Psoas muscle (tissue), 8 donors: ENCODE measurements at regions of chr5 and their contacts with region 1.

Region 1: GRCh38 chr5:86880785-86881492 is 263.2 kb downstream of the COX7C start:
- DNase-seq: no peak
- ATAC-seq: peak; percentile 67 to 80 (median 76)
- H3K4me3 ChIP-seq: no peak overlapping the region
- H3K27ac ChIP-seq: no peak overlapping the region
- H3K4me1 ChIP-seq: no peaks in the 10 kb centered on the region
- H3K27me3 ChIP-seq: no peaks in the 10 kb centered on the region
- CTCF ChIP-seq: peak; percentile 52

Region 2: DNA sequence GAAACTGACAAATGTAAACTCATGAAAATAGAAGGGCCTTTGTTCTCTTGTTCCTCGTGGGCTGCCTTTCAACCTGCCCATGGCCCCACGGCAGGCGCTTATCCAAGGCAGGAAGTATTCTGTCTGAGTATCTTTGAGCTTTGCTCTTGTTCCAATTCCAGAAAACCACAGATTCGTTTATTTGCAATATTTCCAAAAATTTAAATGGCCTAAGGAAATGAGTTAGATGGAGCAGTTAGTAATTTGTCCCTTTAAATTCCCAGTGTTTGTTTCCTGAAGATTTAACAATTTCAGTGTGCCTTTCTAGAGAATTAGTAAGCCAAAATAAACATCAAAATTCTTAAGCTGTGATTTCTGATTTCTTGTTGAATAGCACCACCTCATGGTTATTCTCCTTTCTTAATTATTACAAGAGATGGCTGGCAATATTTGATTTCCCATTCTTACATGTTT is 87.4 kb after region 1 on chr5:
- intact Hi-C with region 1: loop called in 1 of 2 experiments (anchors 5 kb)
- DNase-seq: peak; percentile 10 to 39
- ATAC-seq: no peak
- H3K4me3 ChIP-seq: no peak overlapping the region
- H3K27ac ChIP-seq: no peak overlapping the region
- H3K4me1 ChIP-seq: no peaks in the 10 kb centered on the region
- H3K27me3 ChIP-seq: no peaks in the 10 kb centered on the region
- CTCF ChIP-seq: peak; percentile 37

Region 3: GRCh38 chr5:87008751-87009560 is 128.0 kb after region 1 on chr5:
- intact Hi-C with region 1: loop called in 1 of 2 experiments (anchors 2 kb)
- DNase-seq: no peak
- ATAC-seq: no peak
- H3K4me3 ChIP-seq: no peak overlapping the region
- H3K27ac ChIP-seq: no peak overlapping the region
- H3K4me1 ChIP-seq: no peaks in the 10 kb centered on the region
- H3K27me3 ChIP-seq: no peaks in the 10 kb centered on the region
- CTCF ChIP-seq: no peak

Region 4: DNA sequence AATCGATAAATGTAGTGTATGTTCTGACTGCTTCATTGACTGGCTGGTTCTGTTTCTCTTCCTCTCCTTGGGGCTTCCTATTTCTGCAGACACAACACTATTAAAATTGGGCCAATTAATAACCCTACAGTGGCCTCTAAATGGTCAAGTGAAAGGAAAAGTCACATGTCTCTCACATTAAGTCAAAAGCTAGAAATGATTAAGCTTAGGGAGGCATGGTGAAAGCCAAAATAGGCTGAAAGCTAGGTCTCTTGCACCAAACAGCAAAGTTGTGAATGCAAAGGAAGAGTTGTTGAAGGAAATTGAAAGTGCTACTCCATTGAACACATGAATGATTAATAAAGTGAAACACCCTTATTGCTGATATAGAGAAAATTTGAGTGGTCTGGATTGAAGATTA is 473.6 kb after region 1 on chr5:
- intact Hi-C with region 1: no loop called
- DNase-seq: no peak
- ATAC-seq: no peak
- H3K4me3 ChIP-seq: no peak overlapping the region
- H3K27ac ChIP-seq: no peak overlapping the region
- H3K4me1 ChIP-seq: no peaks in the 10 kb centered on the region
- H3K27me3 ChIP-seq: no peaks in the 10 kb centered on the region
- CTCF ChIP-seq: no peak